KBM-7 (cell line): ENCODE measurements at regions of chr18 and their contacts with region 1.

Region 1: DNA sequence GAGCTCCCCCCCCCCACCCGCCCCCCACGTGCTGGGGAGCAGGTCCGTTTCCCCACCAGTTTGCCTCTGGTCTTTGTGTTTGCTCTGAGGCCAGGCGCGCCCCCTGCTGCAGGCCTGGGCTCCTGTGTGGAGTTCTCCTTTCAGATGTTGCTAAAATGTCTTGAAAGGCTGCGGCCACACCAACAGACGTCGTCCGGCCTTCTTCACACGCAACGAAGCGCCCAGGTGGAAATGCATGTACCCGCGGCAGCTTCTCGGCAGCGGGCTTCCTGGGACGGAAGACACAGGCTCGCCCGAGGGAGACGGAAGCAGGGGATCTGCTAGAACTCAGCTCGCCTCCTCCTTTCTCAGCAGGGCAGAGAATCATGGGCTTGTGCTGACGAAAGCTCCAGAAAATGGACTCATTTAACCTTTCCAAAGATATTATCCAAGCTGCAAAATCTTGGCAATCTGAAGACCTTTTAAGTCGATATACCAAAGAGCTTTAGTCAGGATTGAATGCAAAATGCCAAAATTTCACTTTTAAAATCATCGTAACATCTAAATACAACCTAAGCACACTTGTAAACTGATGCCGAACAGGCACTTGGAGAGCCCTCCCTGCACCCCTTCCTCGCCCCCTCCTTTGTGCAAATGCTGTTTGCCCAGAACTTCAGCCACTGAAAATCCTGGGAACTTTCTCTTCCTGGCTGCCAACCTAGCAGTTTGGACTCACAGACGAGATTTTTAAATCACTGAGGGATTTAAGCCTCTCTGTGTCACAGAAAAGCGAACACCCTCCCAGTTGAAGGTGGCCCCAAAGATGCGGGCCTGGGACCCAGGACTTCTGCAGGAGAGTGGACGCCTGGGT is 125.5 kb upstream of the ZNF516 start:
- DNase-seq: peak; percentile 94

Region 2: GRCh38 chr18:76709659-76710645 is 89.4 kb after region 1 on chr18:
- in situ Hi-C with region 1: loop called (anchors 25 kb)
- DNase-seq: peak; percentile 68